Ovary (tissue), 10 donors: ENCODE measurements at regions of chr1 and their contacts with region 1.

Region 1: DNA sequence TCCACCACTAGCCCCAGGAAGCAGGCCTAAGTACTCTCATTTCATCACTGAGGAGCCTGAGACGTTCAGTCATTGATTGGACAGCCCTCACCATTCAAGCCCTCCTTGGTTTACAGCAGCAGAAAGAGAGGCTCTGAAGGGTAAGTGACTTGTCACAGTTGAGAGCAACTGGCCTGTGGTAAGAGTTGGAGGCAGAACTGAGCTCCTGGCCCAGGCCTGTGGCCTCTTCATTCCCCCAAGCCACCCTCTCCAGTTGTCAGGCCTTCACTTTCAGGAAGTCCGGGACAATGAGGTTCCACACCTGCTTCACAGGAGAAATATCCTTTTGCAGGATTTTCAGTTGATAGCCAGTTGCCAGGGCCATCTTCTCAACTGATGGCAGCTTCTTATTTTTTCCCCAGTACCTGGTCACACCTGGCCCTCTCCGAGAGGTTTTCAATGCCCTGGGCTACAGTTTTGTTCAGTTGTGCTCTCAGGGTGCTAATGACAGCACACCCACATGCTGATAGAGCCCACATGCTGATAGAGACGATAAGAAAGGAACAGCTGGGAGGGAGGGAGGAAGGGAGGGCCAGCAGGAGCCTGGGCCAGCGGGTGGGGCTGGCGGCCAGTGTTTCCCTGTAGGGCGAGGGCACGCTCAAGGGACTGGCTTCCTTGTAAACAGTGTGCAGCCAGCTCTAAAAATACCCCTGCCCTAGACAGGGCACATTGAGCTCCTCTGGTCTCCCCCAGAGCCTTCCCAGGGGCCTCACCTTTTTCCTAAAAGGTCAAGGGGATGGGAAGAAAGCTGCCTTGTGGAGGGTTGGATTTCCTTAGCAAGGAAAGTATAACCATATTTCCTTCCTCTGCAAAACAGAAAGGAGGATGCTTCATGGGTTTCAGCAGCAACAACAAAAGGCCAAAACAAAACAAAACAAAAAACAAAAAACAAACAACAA is 112.7 kb upstream of the JUN start:
- DNase-seq: peak in 2 of 5 donors; percentile 27 to 59
- H3K4me3 ChIP-seq: no peak overlapping the region
- H3K27ac ChIP-seq: peak overlapping the region in 1 of 2 donors; percentile 14
- H3K4me1 ChIP-seq: peaks cover 26% of the 10 kb centered on the region
- H3K27me3 ChIP-seq: no peaks in the 10 kb centered on the region
- CTCF ChIP-seq: no peak
- EP300 ChIP-seq: no peak
- POLR2A ChIP-seq: no peak

Region 2: DNA sequence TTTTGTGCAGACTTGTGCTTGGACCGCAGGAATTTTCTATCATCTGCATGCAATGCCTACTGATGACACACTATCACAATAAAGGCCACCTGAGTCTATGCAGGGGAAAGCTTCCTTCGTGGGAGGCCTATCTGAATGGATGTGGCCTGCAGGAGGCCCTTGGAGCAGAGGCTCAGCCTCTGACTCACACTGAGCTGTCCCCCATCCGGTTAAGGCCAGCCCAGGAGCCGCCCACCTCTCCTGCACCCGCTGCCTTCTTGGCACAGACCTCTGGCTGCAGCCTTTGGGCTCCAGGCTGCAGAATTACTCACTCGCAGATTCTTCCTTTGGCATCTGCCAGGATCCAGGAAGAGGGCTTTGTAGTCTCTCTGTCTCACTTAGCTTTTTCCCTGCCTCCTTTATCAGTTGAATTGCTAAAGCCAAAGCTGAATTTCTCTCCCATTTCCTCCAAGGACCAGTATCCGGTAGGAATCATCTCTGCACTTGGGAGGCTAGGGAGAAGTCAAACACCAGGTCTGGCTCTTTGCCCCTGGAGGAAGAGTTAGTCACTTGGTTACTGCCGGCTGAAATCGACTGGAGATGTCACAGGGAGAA is 47.6 kb before region 1 on chr1:
- intact Hi-C with region 1: loop called in 1 of 4 experiments (anchors 2 kb)
- DNase-seq: peak; percentile 63 to 74 (median 66)
- H3K4me3 ChIP-seq: no peak overlapping the region
- H3K27ac ChIP-seq: no peak overlapping the region
- H3K4me1 ChIP-seq: peaks cover 6% of the 10 kb centered on the region
- H3K27me3 ChIP-seq: no peaks in the 10 kb centered on the region
- CTCF ChIP-seq: no peak
- EP300 ChIP-seq: no peak
- POLR2A ChIP-seq: no peak